ENCODE measurements at regions of chr3 and their contacts with region 1.

Region 1: GRCh38 chr3:198080521-198081280 is 120.7 kb downstream of the LMLN start:
- DNase-seq: peak; percentile 80
- ATAC-seq: peak; percentile 94
- H3K4me3 Mint-ChIP-seq: peak overlapping the region; percentile 78
- H3K27ac Mint-ChIP-seq: peak overlapping the region; percentile 80
- H3K4me1 Mint-ChIP-seq: peaks cover 7% of the 10 kb centered on the region
- H3K27me3 Mint-ChIP-seq: peaks cover 37% of the 10 kb centered on the region

Region 2: DNA sequence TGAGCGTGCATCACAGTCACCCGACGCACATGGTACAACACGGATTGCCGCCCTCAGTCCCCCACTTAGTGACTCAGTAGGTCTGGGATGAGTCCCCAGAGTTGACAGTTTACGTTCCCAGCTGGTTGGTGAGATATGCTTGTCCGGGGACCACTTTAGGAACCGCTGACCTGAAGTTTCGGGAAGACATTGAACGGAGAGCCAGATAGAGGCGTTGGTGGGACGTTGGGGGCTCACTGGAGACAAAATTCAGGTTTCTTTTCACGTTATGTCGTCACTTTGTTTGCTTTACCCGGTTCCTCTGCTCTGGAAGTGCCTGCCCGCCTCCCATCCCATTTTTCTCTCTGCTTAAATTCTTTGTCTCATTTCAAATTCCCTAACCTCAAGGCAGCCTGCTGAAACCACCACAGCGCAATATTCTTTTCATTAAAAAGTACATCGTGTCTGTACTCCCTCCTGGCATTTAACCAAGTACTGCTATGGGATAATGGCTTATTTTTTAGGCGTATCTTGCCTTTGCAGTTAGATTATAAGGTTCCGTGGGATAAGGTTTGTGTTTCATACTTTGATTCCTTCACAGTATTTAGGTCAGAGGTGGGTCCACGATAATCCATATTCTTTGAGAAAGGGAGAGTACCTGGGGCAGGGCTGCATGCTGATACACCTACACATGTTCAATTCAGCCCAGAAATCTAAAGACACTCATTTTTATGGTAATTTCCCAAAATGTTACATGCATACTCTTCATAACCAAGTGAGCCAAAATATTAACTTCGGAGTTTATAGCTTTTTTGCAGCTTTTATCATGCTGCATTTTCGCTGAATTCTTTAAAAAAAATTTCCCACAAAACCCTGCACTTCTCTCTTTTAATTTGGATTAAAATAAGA is 119.8 kb before region 1 on chr3:
- CTCF ChIA-PET with region 1: interaction called, 11 read pairs
- POLR2A ChIA-PET with region 1: interaction called, 4 read pairs
- DNase-seq: no peak
- ATAC-seq: no peak
- H3K4me3 Mint-ChIP-seq: peak overlapping the region; percentile 91
- H3K27ac Mint-ChIP-seq: peak overlapping the region; percentile 93
- H3K4me1 Mint-ChIP-seq: peaks cover 54% of the 10 kb centered on the region
- H3K27me3 Mint-ChIP-seq: no peaks in the 10 kb centered on the region

Region 3: DNA sequence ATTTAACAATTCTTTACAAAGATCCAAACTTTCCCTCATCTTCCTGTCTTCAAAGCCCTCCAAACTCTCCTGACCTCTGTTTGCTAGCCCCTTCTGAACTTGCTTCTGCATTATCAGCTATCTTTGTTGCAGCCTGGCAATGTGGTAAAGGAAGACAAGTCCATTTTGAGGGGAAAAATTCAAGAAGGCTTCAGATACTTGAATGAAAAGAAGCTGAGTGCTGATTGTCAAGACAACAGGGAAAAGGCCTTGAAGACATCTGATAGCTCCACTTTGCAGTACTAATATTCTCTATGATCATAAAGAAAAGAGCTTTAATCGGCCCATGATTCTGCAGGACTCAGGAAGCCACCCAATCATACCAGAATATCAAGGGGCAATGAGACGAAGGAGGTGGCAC is 28.9 kb before region 1 on chr3:
- CTCF ChIA-PET with region 1: interaction called, 11 read pairs
- POLR2A ChIA-PET with region 1: no interaction called
- DNase-seq: no peak
- ATAC-seq: no peak
- H3K4me3 Mint-ChIP-seq: no peak overlapping the region
- H3K27ac Mint-ChIP-seq: no peak overlapping the region
- H3K4me1 Mint-ChIP-seq: no peaks in the 10 kb centered on the region
- H3K27me3 Mint-ChIP-seq: peaks cover 5% of the 10 kb centered on the region

Region 4: GRCh38 chr3:198061119-198062067 is 19.3 kb before region 1 on chr3:
- CTCF ChIA-PET with region 1: interaction called, 11 read pairs
- POLR2A ChIA-PET with region 1: interaction called, 4 read pairs
- DNase-seq: no peak
- ATAC-seq: no peak
- H3K4me3 Mint-ChIP-seq: no peak overlapping the region
- H3K27ac Mint-ChIP-seq: no peak overlapping the region
- H3K4me1 Mint-ChIP-seq: no peaks in the 10 kb centered on the region
- H3K27me3 Mint-ChIP-seq: peaks cover 6% of the 10 kb centered on the region

Region 5: DNA sequence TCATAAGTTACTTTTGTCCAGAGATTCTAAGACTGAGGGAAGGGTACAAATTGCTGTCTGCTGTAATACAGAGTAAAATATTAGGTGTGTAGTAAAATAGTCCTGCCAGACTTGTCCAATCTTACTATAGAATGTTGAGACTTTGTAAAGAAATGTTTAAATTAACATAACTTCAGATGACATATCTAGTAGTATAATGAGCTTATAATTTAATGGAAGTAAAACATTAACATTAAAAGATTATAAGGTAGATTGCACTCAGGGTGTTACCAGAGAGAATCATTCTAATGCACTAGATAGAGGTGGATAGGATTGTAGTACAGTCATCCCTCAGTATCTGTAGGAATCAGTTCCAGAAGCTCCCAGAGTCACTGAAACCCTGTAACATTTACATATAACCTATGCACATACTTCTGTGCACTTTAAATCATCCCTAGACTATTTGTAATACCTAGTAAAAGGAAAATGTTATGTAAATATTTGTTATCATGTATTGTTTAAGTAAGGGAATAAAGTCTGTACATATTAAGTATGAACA is 10.2 kb after region 1 on chr3:
- CTCF ChIA-PET with region 1: interaction called, 15 read pairs
- POLR2A ChIA-PET with region 1: no interaction called
- DNase-seq: no peak
- ATAC-seq: no peak
- H3K4me3 Mint-ChIP-seq: no peak overlapping the region
- H3K27ac Mint-ChIP-seq: no peak overlapping the region
- H3K4me1 Mint-ChIP-seq: no peaks in the 10 kb centered on the region
- H3K27me3 Mint-ChIP-seq: peaks cover 46% of the 10 kb centered on the region